Body of pancreas (tissue), 4 donors: ENCODE measurements at regions of chr4 and their contacts with region 1.

Region 1: GRCh38 chr4:42568610-42569207 is 88.2 kb downstream of the ATP8A1 start:
- DNase-seq: peak; percentile 73 to 78 (median 74)
- ATAC-seq: peak; percentile 80
- H3K4me3 ChIP-seq: no peak overlapping the region
- H3K27ac ChIP-seq: no peak overlapping the region
- H3K4me1 ChIP-seq: peaks cover 11% of the 10 kb centered on the region
- H3K27me3 ChIP-seq: no peaks in the 10 kb centered on the region
- CTCF ChIP-seq: peak; percentile 40 to 77 (median 66)
- POLR2A ChIP-seq: no peak

Region 2: GRCh38 chr4:42865572-42866189 is 297.0 kb after region 1 on chr4:
- intact Hi-C with region 1: loop called (anchors 5 kb)
- DNase-seq: peak; percentile 57 to 68 (median 64)
- ATAC-seq: peak; percentile 60
- H3K4me3 ChIP-seq: no peak overlapping the region
- H3K27ac ChIP-seq: no peak overlapping the region
- H3K4me1 ChIP-seq: no peaks in the 10 kb centered on the region
- H3K27me3 ChIP-seq: no peaks in the 10 kb centered on the region
- CTCF ChIP-seq: peak; percentile 62 to 77 (median 74)
- POLR2A ChIP-seq: no peak